ENCODE measurements at regions of chr3 and their contacts with region 1.

Region 1: DNA sequence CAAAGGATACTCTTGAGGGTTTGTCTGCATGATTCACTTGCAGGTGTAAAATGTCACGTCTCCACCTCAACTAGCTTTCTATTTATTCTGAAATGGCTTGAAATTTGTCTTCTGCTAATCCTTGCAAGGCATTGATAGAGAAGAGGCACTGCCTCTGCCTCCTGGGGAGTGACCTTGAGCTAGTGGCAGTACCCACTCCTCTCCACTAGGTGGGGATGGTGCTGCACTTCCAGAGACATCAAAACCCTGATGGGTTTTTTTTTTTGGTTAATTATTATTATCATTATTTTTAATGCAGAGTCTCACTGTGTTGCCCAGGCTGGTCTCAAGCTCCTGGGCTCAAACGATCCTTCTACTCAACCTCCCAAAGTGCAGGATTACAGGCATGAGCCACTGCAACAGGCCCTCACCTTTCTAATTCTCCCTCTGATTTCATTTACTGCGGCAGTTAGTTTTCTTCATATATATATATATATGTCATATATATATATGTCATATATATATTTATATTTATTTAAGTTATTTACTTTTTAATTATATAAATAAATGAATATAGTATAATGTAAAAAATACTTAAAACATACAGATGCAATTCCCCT is 117.6 kb upstream of the EIF1B start:
- DNase-seq: peak; percentile 74
- CTCF ChIP-seq: peak; percentile 82

Region 2: GRCh38 chr3:40306336-40306735 is 114.4 kb after region 1 on chr3:
- in situ Hi-C with region 1: no loop called
- DNase-seq: no peak
- CTCF ChIP-seq: no peak

Region 3: GRCh38 chr3:40317061-40317855 is 125.3 kb after region 1 on chr3:
- in situ Hi-C with region 1: loop called (anchors 5 kb)
- DNase-seq: peak; percentile 56
- CTCF ChIP-seq: peak; percentile 70

Region 4: GRCh38 chr3:41159581-41160189 is 967.7 kb after region 1 on chr3:
- in situ Hi-C with region 1: no loop called
- DNase-seq: no peak
- CTCF ChIP-seq: no peak